MCF 10A (cell line): ENCODE measurements at regions of chr12 and their contacts with region 1.

Region 1: GRCh38 chr12:1939801-1940607 is 21.6 kb upstream of the CACNA2D4 start:
- DNase-seq: peak; percentile 74
- H3K4me3 Mint-ChIP-seq: no peak overlapping the region
- H3K27ac Mint-ChIP-seq: no peak overlapping the region
- H3K4me1 Mint-ChIP-seq: peaks cover 4% of the 10 kb centered on the region
- H3K27me3 Mint-ChIP-seq: peaks cover 34% of the 10 kb centered on the region
- CTCF ChIP-seq: peak; percentile 86

Region 2: DNA sequence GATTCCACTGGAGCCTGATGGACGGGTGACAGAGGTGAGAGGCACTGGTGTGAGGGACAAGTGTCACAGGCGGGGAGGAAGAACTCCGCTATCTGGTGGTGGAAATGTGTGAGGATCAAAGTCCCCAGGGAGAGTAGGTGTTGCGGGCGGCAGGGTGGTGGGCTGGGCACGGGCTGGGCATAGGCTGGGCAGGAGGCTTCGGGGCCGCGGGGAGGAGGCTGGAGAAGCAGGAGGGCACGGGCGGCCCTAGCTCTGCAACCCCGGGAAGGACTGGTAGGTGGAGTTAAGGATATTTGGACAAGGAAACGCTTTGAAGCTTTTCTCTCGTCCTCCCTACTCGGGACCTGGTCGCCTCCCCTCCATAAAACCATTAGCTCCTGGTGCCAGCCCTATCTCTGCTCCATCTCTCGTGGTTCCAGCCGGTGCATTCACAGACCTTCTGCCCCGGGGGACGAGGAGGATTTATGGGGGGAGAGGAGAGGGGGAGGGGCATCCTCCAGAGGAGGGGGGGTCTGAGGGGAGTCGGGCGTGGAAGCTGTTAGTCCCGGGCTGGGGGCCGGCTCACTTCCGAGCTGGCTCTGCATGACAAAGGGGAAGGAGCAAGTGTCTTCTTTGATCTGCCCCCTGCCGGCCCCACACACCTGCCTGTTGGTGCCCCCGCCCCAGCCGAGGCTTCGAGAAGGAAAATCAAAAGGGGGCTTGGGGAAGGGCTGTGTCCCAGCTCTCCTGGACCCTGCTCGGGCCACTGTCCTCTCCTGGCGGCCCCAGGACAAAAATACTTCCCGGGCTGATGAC is 310.5 kb before region 1 on chr12:
- CTCF ChIA-PET with region 1: interaction called, 21 read pairs
- POLR2A ChIA-PET with region 1: interaction called, 4 read pairs
- intact Hi-C with region 1: loop called (anchors 1 kb)
- DNase-seq: no peak
- H3K4me3 Mint-ChIP-seq: peak overlapping the region; percentile 61
- H3K27ac Mint-ChIP-seq: no peak overlapping the region
- H3K4me1 Mint-ChIP-seq: peaks cover 14% of the 10 kb centered on the region
- H3K27me3 Mint-ChIP-seq: peaks cover 16% of the 10 kb centered on the region
- CTCF ChIP-seq: peak; percentile 6

Region 3: DNA sequence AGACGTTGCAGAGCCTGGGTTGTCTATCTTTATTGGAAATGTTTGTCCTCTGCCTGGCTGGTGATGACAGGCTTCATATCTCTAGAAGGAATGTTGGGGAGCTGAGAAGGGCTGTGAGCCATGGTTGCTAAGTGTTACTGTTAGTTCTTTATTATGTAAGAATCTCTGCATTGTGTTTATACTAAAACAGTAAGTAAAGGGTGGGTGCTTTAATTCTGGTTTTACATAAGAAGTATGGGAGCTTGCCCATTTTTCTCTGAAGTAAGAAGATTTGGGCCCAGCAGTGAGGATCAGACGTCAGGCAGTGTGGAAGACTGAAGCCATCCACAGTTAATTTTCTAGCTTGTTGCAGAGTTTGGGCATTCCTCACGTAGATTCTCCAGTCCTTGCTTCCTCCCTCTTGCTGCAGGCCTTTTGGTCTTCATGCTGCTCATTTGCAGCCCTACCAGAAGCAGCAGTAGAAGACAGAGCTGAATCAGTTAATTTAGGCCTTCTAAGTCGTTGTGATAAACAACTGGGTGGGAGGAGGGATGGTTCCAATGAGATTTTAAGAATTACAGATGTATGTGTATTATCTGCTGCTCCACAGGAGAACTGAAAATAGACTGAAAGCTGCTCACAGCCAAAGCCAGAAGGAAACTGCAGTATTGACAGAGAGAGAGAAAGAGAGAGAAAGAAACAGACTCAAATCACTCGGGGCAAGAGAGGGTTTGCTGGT is 289.6 kb before region 1 on chr12:
- CTCF ChIA-PET with region 1: interaction called, 55 read pairs
- POLR2A ChIA-PET with region 1: interaction called, 3 read pairs
- intact Hi-C with region 1: loop called (anchors 1 kb)
- DNase-seq: no peak
- H3K4me3 Mint-ChIP-seq: no peak overlapping the region
- H3K27ac Mint-ChIP-seq: no peak overlapping the region
- H3K4me1 Mint-ChIP-seq: peaks cover 2% of the 10 kb centered on the region
- H3K27me3 Mint-ChIP-seq: peaks cover 10% of the 10 kb centered on the region
- CTCF ChIP-seq: no peak

Region 4: DNA sequence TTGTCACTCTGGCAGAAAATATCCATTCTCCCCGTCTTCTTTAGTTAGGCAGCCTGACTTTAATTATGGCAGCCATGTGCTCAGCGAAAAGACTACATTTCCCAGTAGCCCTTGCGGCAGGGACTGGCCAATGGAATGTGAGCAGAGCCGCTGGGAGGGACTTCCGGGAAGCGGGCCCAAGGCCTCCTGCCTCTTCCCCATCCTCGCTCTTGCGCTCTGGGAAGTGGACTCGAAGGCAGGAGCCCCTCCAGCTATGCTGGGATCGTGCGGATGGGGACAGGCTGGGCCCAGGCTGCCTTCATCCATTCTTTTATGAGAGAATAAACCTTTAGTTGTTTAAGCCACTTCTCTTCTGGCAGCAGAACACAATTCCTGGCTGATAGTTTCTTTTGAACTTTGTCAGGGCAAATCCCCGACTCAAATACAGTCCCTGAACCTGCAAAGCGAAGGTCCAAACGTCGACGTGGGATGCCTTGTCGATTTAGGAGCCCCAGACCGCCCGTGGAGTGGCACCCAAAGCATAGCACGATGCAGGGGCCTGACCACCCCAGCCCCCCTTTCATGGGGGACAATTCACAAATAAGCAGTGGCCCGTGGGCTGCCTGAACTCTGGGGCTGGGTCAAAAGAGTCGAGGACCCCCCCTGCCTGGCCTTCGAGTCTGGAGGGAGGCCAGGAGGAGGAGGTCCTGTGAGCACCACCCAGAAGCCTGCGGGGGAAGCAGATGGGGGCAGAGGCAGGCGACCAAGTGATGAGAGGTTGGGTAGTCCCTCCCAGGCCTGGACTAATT is 135.3 kb before region 1 on chr12:
- CTCF ChIA-PET with region 1: interaction called, 38 read pairs
- POLR2A ChIA-PET with region 1: no interaction called
- intact Hi-C with region 1: no loop called
- DNase-seq: peak; percentile 90
- H3K4me3 Mint-ChIP-seq: no peak overlapping the region
- H3K27ac Mint-ChIP-seq: peak overlapping the region; percentile 63
- H3K4me1 Mint-ChIP-seq: no peaks in the 10 kb centered on the region
- H3K27me3 Mint-ChIP-seq: no peaks in the 10 kb centered on the region
- CTCF ChIP-seq: no peak

Region 5: DNA sequence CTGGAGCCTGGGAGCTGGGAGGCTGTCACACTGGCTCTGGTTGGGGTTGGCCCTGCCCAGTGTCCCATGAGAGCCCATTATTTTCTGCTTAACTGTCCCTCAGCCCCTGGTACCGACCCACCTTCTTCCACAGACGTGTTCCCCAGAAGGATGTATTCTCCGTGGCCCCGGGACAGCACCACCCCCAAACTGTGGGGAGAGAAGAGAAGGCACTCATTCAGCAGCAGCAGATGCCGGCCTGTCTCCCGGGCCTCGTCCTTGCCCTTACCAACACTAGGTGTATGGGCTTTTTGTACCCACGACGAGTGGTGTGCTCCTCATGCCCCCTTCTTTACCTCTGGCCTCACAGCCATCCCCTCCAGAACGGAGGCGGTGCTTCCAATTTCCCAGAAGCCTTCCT is 81.5 kb before region 1 on chr12:
- CTCF ChIA-PET with region 1: interaction called, 10 read pairs
- POLR2A ChIA-PET with region 1: no interaction called
- intact Hi-C with region 1: no loop called
- DNase-seq: no peak
- H3K4me3 Mint-ChIP-seq: no peak overlapping the region
- H3K27ac Mint-ChIP-seq: no peak overlapping the region
- H3K4me1 Mint-ChIP-seq: peaks cover 5% of the 10 kb centered on the region
- H3K27me3 Mint-ChIP-seq: peaks cover 14% of the 10 kb centered on the region
- CTCF ChIP-seq: no peak

Region 6: GRCh38 chr12:1927751-1928351 is 12.2 kb before region 1 on chr12:
- CTCF ChIA-PET with region 1: interaction called, 30 read pairs
- POLR2A ChIA-PET with region 1: no interaction called
- intact Hi-C with region 1: no loop called
- DNase-seq: no peak
- H3K4me3 Mint-ChIP-seq: no peak overlapping the region
- H3K27ac Mint-ChIP-seq: no peak overlapping the region
- H3K4me1 Mint-ChIP-seq: no peaks in the 10 kb centered on the region
- H3K27me3 Mint-ChIP-seq: peaks cover 84% of the 10 kb centered on the region
- CTCF ChIP-seq: no peak

Region 7: GRCh38 chr12:2034633-2035430 is 94.8 kb after region 1 on chr12:
- CTCF ChIA-PET with region 1: interaction called, 6 read pairs
- POLR2A ChIA-PET with region 1: no interaction called
- intact Hi-C with region 1: loop called (anchors 10 kb)
- DNase-seq: peak; percentile 53
- H3K4me3 Mint-ChIP-seq: peak overlapping the region; percentile 40
- H3K27ac Mint-ChIP-seq: no peak overlapping the region
- H3K4me1 Mint-ChIP-seq: peaks cover 5% of the 10 kb centered on the region
- H3K27me3 Mint-ChIP-seq: peaks cover 86% of the 10 kb centered on the region
- CTCF ChIP-seq: peak; percentile 59